Activated CD4-positive, alpha-beta T cell treated with anti-CD3 and anti-CD28 coated beads, Interleukin-2, amount 10 ng/mL, durations not matched to agents 24 days and 14 days (primary cell): ENCODE measurements at regions of chr16 and their contacts with region 1.

Region 1: DNA sequence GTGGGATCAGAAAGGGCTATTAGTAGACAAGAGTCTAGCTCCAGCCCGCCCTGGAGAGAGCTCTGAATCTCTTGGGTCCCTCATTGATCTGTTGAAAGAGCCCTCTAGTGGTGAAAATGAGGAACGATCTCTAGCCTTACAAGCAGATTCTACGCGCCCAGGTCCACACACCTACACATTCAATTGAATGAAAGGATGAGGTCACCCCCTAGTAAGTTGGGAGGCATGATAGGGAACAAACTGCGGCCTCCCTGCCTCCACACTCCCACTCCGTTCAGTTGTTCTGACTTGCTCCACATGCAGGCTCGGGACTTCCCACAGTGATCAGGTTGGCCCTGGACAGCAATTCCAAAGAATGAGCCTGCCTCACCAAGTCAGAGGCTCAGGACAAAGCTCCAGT is 2.9 kb upstream of the CACNG3 start:
- DNase-seq: peak; percentile 77
- H3K4me3 Mint-ChIP-seq: no peak overlapping the region
- H3K27ac Mint-ChIP-seq: no peak overlapping the region
- H3K4me1 Mint-ChIP-seq: peaks cover 4% of the 10 kb centered on the region
- H3K27me3 Mint-ChIP-seq: peaks cover 40% of the 10 kb centered on the region

Region 2: DNA sequence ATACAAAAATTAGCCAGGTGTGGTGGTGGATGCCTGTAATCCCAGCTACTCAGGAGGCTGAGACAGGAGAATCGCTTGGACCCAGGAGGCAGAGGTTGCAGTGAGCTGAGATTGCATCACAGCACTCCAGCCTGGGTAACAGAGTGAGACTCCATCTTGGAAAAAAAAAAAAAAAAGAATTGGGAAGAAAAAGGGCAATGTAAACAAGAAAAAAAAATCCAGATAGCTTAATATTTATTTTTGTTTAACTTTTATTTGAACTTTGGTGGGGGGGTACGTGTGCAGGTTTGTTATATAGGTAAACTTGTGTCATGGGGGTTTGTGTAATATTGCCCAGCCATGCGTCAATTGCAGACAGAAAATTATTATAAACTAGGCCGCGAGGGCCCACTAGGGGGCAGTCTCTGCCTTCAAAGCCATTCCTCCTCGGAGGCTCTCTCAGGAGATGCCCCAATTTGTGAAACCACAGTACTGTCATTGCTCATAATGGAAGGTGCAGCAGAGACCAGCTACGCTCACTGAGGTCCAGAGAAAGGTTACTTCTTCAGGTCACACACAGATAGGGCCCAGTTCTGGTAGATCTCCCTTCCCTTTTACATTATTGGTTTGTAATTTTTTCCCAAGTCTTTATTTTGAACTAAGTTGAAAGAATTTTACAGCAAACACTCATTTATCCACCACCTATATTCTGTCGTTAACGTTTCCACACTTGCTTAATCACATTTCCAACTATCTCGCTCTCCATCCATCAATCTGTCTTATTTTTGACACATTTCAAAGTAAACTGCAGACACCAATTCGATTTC is 211.2 kb before region 1 on chr16:
- intact Hi-C with region 1: loop called (anchors 1 kb)
- DNase-seq: peak; percentile 92
- H3K4me3 Mint-ChIP-seq: no peak overlapping the region
- H3K27ac Mint-ChIP-seq: no peak overlapping the region
- H3K4me1 Mint-ChIP-seq: peaks cover 4% of the 10 kb centered on the region
- H3K27me3 Mint-ChIP-seq: no peaks in the 10 kb centered on the region

Region 3: GRCh38 chr16:24054741-24055491 is 198.3 kb before region 1 on chr16:
- intact Hi-C with region 1: no loop called
- DNase-seq: no peak
- H3K4me3 Mint-ChIP-seq: no peak overlapping the region
- H3K27ac Mint-ChIP-seq: no peak overlapping the region
- H3K4me1 Mint-ChIP-seq: no peaks in the 10 kb centered on the region
- H3K27me3 Mint-ChIP-seq: no peaks in the 10 kb centered on the region

Region 4: GRCh38 chr16:24070851-24071250 is 182.3 kb before region 1 on chr16:
- intact Hi-C with region 1: loop called (anchors 1 kb)
- DNase-seq: peak; percentile 74
- H3K4me3 Mint-ChIP-seq: no peak overlapping the region
- H3K27ac Mint-ChIP-seq: no peak overlapping the region
- H3K4me1 Mint-ChIP-seq: peaks cover 15% of the 10 kb centered on the region
- H3K27me3 Mint-ChIP-seq: no peaks in the 10 kb centered on the region

Region 5: GRCh38 chr16:24178496-24178895 is 74.7 kb before region 1 on chr16:
- intact Hi-C with region 1: no loop called
- DNase-seq: peak; percentile 65
- H3K4me3 Mint-ChIP-seq: no peak overlapping the region
- H3K27ac Mint-ChIP-seq: no peak overlapping the region
- H3K4me1 Mint-ChIP-seq: no peaks in the 10 kb centered on the region
- H3K27me3 Mint-ChIP-seq: no peaks in the 10 kb centered on the region